ENCODE measurements at regions of chr5 and their contacts with region 1.

Region 1: GRCh38 chr5:81751009-81751835 is at the start of gene SSBP2:
- DNase-seq: peak; percentile 92
- H3K4me3 ChIP-seq: peak within 1 kb of the TSS; percentile 85
- CTCF ChIP-seq: no peak

Region 2: DNA sequence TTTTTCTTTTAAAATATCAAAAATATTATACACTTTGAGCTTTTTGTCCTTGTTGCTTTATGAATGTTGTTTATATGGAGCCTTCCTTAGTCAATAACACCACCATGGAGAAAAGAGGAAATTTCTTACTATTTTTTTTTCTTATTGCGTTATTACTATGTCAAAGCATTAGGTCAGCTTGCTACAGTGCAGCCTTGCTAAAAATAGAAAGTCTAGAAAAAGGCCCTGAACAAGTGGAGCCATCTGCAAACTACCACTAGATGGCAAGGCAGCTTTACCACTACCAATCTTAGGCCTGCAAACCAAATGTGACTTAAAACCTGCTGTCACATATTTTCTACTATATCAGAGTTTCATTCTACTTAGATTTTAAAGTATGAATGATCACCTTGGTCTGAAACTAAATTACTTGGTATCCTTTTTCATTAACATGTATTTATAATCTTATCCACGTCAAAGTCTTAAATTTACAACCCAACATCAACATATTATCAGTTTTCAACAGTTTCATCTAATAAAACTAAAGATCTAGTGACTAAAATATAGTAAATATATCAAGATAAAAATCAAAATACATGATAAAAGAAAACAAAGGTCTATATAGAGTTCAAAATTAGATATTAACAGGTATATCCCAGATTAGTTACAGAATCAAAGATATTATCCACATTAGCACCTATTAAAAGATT is 244.2 kb before region 1 on chr5:
- CTCF ChIA-PET with region 1: interaction called, 28 read pairs
- POLR2A ChIA-PET with region 1: no interaction called
- DNase-seq: peak; percentile 71
- H3K4me3 ChIP-seq: no peak overlapping the region
- CTCF ChIP-seq: peak; percentile 81

Region 3: GRCh38 chr5:81513982-81514381 is 237.2 kb before region 1 on chr5:
- CTCF ChIA-PET with region 1: interaction called, 28 read pairs
- POLR2A ChIA-PET with region 1: no interaction called
- DNase-seq: no peak
- H3K4me3 ChIP-seq: no peak overlapping the region
- CTCF ChIP-seq: no peak

Region 4: DNA sequence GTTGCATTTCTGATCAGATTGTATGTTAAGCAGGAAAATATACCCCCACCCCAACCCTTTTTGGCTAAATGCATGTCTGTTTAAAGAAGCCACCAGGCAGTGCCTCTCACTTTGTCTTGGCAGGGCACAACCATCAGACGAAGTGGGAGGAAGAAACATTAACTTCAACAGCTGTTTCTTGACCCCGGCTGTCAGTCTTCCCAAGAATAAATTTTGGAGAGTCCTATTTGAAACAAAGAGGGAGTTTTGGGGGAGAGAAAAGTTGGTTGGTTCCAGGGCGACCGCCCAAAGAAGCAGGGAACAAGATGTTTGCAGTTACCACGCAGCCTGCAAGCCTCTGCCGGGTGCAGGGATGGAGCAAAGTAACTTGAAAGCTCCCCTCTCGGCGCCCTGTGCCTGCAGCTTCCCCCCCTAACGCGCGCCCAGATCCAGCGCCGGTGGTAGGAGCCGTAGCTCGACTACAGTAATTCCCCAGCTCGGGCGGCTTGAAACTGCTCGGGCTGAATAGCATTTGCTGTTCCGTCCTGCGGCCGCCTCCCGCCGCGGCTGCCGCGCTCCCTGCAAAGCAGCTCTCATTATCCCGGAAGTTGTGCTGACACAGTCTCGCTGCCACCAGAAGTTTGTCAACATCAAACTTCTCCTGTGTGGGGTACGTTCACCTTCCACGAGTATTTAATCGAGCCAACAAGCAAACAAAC is 100.4 kb after region 1 on chr5:
- CTCF ChIA-PET with region 1: interaction called, 38 read pairs
- POLR2A ChIA-PET with region 1: interaction called, 134 read pairs
- DNase-seq: peak; percentile 69
- H3K4me3 ChIP-seq: peak overlapping the region; percentile 54
- CTCF ChIP-seq: no peak